ENCODE measurements at regions of chr17 and their contacts with region 1.

Region 1: GRCh38 chr17:48131216-48131824 is 23.8 kb downstream of the SNX11 start:
- DNase-seq: peak; percentile 39 to 68 (median 64)
- H3K4me3 ChIP-seq: no peak overlapping the region
- H3K4me3 Mint-ChIP-seq: no peak overlapping the region
- H3K27ac ChIP-seq: no peak overlapping the region
- H3K27ac Mint-ChIP-seq: no peak overlapping the region
- H3K4me1 ChIP-seq: no peaks in the 10 kb centered on the region
- H3K4me1 Mint-ChIP-seq: no peaks in the 10 kb centered on the region
- H3K27me3 ChIP-seq: no peaks in the 10 kb centered on the region
- H3K27me3 Mint-ChIP-seq: peaks cover 0 to 8% (median 6%) of the 10 kb centered on the region in 3 donors
- CTCF ChIP-seq: peak; percentile 95

Region 2: GRCh38 chr17:47987240-47987835 is 144.0 kb before region 1 on chr17:
- intact Hi-C with region 1: no loop called
- DNase-seq: no peak
- H3K4me3 ChIP-seq: no peak overlapping the region
- H3K4me3 Mint-ChIP-seq: no peak overlapping the region
- H3K27ac ChIP-seq: no peak overlapping the region
- H3K27ac Mint-ChIP-seq: peak overlapping the region in 1 of 7 donors; percentile 35
- H3K4me1 ChIP-seq: peaks cover 5 to 20% of the 10 kb centered on the region in 2 donors
- H3K4me1 Mint-ChIP-seq: peaks cover 27% of the 10 kb centered on the region
- H3K27me3 ChIP-seq: peaks cover 0 to 5% of the 10 kb centered on the region in 2 donors
- H3K27me3 Mint-ChIP-seq: peaks cover 2 to 13% (median 2%) of the 10 kb centered on the region in 3 donors
- CTCF ChIP-seq: no peak

Region 3: GRCh38 chr17:48084932-48085444 is 46.3 kb before region 1 on chr17:
- intact Hi-C with region 1: loop called (anchors 2 to 10 kb)
- DNase-seq: no peak
- H3K4me3 ChIP-seq: no peak overlapping the region
- H3K4me3 Mint-ChIP-seq: no peak overlapping the region
- H3K27ac ChIP-seq: no peak overlapping the region
- H3K27ac Mint-ChIP-seq: no peak overlapping the region
- H3K4me1 ChIP-seq: no peaks in the 10 kb centered on the region
- H3K4me1 Mint-ChIP-seq: peaks cover 3% of the 10 kb centered on the region
- H3K27me3 ChIP-seq: no peaks in the 10 kb centered on the region
- H3K27me3 Mint-ChIP-seq: no peaks in the 10 kb centered on the region
- CTCF ChIP-seq: no peak